ENCODE measurements at regions of chr6 and their contacts with region 1.

Region 1: DNA sequence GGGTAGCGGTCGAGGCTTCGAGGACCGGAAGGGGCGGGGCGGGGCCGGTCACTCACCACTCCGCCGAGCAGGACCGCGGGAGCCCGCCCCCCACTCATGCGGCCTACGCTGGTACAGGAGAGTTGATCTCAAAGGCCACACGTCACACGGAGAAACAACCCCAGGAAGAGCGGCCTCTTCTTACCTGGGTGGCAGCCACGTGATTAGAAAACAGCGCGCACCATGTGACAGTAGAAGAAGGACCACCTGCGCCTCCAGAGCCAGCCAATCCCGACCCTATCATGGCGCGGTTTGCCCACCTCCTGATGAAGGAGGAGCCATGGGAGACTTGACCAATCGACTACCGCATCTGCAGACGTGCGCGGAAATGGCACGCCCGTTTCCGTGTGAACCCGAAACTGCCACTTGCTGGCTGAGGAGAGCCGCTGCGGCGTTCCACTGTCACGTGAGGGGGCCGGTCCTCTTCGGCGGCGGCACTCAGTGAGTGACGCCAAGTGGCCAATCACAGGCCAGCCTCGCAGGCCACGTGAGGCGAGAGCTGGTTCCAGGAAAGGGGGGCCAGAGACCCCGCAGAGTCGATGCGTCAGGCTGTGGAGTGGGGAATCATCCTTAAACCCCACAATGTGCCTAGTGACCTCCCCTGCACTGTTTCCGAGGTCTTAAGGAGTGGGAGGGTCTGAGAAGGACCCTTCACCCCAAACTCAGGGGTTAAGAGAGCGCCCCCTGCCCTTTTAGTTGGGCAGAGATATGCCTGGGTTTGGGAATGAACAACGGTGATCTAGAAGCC is at the start of gene CUTA:
- DNase-seq: peak; percentile 100
- H3K4me3 Mint-ChIP-seq: peak within 1 kb of the TSS; percentile 92
- H3K27ac Mint-ChIP-seq: peak within 1 kb of the TSS; percentile 99
- H3K4me1 Mint-ChIP-seq: peaks cover 65% of the 10 kb centered on the region
- H3K27me3 Mint-ChIP-seq: no peaks in the 10 kb centered on the region
- total RNA-seq, gene CUTA: 163 to 181 TPM

Region 2: GRCh38 chr6:32843979-32844838 is 573.9 kb before region 1 on chr6 and contains the start of gene PSMB8:
- CTCF ChIA-PET with region 1: no interaction called
- intact Hi-C with region 1: loop called (anchors 5 kb)
- DNase-seq: peak; percentile 100
- H3K4me3 Mint-ChIP-seq: peak within 1 kb of the TSS; percentile 98
- H3K27ac Mint-ChIP-seq: peak within 1 kb of the TSS; percentile 99
- H3K4me1 Mint-ChIP-seq: peaks cover 71% of the 10 kb centered on the region
- H3K27me3 Mint-ChIP-seq: no peaks in the 10 kb centered on the region
- total RNA-seq, gene PSMB8: 286 to 308 TPM

Region 3: DNA sequence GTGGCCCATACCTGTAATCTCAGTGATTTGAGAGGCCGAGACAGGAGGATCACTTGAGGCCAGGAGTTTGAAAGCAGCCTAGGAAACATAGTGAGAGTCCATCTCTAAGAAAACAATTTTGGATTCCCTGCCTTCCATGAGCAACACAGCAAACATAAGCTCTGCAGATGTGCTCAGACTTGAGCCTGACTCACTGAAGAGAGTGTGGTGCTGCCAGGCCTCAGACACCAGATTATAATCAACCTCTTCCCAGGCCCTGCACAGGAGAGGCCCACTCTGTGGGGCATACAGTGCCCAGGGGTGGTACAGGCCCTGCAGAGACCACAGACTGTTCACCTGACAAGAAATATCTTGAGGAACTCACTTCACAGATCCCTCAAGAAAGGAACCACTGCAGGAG is 322.4 kb before region 1 on chr6:
- CTCF ChIA-PET with region 1: no interaction called
- intact Hi-C with region 1: no loop called
- DNase-seq: no peak
- H3K4me3 Mint-ChIP-seq: no peak overlapping the region
- H3K27ac Mint-ChIP-seq: no peak overlapping the region
- H3K4me1 Mint-ChIP-seq: no peaks in the 10 kb centered on the region
- H3K27me3 Mint-ChIP-seq: peaks cover 6% of the 10 kb centered on the region

Region 4: GRCh38 chr6:33271458-33272274 is 146.4 kb before region 1 on chr6 and contains the starts of genes RPS18 and VPS52:
- CTCF ChIA-PET with region 1: no interaction called
- intact Hi-C with region 1: loop called (anchors 2 kb)
- DNase-seq: peak; percentile 95
- H3K4me3 Mint-ChIP-seq: peak within 1 kb of the TSS; percentile 99
- H3K27ac Mint-ChIP-seq: peak within 1 kb of the TSS; percentile 100
- H3K4me1 Mint-ChIP-seq: peaks cover 45% of the 10 kb centered on the region
- H3K27me3 Mint-ChIP-seq: no peaks in the 10 kb centered on the region
- total RNA-seq, gene RPS18: 5,497 to 5,551 TPM
- total RNA-seq, gene VPS52: 30.3 to 31.0 TPM

Region 5: GRCh38 chr6:33323623-33323948 is 94.5 kb before region 1 on chr6:
- CTCF ChIA-PET with region 1: interaction called, 4 read pairs
- intact Hi-C with region 1: loop called (anchors 1 kb)
- DNase-seq: no peak
- H3K4me3 Mint-ChIP-seq: peak overlapping the region; percentile 95
- H3K27ac Mint-ChIP-seq: peak overlapping the region; percentile 98
- H3K4me1 Mint-ChIP-seq: peaks cover 43% of the 10 kb centered on the region
- H3K27me3 Mint-ChIP-seq: no peaks in the 10 kb centered on the region

Region 6: GRCh38 chr6:33454009-33454946 is 36.2 kb after region 1 on chr6 and contains the start of gene ZBTB9:
- CTCF ChIA-PET with region 1: no interaction called
- intact Hi-C with region 1: loop called (anchors 1 kb)
- DNase-seq: peak; percentile 96
- H3K4me3 Mint-ChIP-seq: peak within 1 kb of the TSS; percentile 87
- H3K27ac Mint-ChIP-seq: peak within 1 kb of the TSS; percentile 85
- H3K4me1 Mint-ChIP-seq: peaks cover 47% of the 10 kb centered on the region
- H3K27me3 Mint-ChIP-seq: no peaks in the 10 kb centered on the region
- total RNA-seq, gene ZBTB9: 5.0 to 6.5 TPM

Region 7: GRCh38 chr6:33579828-33580714 is 162.0 kb after region 1 on chr6 and contains the start of gene BAK1:
- CTCF ChIA-PET with region 1: interaction called, 3 read pairs
- intact Hi-C with region 1: loop called (anchors 2 kb)
- DNase-seq: peak; percentile 92
- H3K4me3 Mint-ChIP-seq: peak within 1 kb of the TSS; percentile 86
- H3K27ac Mint-ChIP-seq: peak within 1 kb of the TSS; percentile 96
- H3K4me1 Mint-ChIP-seq: peaks cover 35% of the 10 kb centered on the region
- H3K27me3 Mint-ChIP-seq: no peaks in the 10 kb centered on the region
- total RNA-seq, gene BAK1: 38.3 to 41.1 TPM

Measured in activated naive CD4-positive, alpha-beta T cell treated with anti-CD3 and anti-CD28 coated beads for 36 hours (primary cell).